PC-9 (cell line): ENCODE measurements at regions of chr9 and their contacts with region 1.

Region 1: DNA sequence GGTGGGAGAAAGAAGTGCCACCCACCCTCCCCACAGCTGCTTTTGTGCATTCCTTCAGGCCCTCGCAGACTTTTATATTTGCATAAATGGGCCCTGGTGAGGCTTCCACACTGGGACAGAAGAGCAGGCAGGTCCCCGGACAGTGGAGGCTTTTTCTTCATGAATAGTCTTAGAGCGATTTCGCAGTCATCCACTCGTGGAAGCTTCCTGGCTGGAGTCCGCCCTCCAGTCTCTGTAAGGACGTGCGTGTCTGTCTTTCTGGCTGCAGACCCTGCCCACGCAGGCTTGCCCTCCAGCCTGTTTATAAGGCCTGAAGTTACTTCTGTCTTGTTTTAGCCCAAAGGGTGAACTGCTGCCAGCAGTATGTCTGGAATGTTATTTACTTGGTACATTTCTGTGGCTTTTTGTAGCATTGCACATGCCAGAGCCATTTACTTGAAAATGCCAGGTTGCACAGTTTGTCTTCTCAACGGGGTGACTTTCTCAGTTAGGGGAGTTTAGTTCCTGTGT is 195.7 kb downstream of the AOPEP start:
- DNase-seq: peak; percentile 79 to 99
- H3K4me3 ChIP-seq: peak overlapping the region; percentile 46
- H3K27ac ChIP-seq: peak overlapping the region; percentile 97
- H3K4me1 ChIP-seq: peaks cover 92% of the 10 kb centered on the region
- H3K27me3 ChIP-seq: no peaks in the 10 kb centered on the region
- CTCF ChIP-seq: no peak

Region 2: DNA sequence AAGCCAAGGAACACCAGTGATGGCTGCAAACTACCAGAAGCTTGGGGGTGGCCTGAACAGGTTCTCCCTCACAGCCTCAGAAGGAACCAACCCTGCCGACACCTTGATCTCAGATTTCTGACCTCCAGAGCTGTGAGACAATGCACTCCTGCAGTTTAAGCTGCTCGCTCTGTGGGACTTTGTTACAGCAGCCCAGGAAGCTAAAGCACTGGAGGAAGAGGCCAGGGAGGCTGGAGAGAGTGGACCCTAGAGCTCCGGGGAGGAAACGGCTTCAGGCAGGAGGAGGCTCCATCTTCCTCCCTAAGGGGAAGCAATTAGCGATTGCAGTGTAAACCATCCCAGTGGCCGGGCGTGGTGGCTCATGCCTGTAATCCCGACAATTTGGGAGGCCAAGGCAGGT is 992.1 kb before region 1 on chr9:
- CTCF ChIA-PET with region 1: no interaction called
- POLR2A ChIA-PET with region 1: no interaction called
- intact Hi-C with region 1: no loop called
- DNase-seq: no peak
- H3K4me3 ChIP-seq: no peak overlapping the region
- H3K27ac ChIP-seq: no peak overlapping the region
- H3K4me1 ChIP-seq: no peaks in the 10 kb centered on the region
- H3K27me3 ChIP-seq: peaks cover 97% of the 10 kb centered on the region
- CTCF ChIP-seq: no peak

Region 3: DNA sequence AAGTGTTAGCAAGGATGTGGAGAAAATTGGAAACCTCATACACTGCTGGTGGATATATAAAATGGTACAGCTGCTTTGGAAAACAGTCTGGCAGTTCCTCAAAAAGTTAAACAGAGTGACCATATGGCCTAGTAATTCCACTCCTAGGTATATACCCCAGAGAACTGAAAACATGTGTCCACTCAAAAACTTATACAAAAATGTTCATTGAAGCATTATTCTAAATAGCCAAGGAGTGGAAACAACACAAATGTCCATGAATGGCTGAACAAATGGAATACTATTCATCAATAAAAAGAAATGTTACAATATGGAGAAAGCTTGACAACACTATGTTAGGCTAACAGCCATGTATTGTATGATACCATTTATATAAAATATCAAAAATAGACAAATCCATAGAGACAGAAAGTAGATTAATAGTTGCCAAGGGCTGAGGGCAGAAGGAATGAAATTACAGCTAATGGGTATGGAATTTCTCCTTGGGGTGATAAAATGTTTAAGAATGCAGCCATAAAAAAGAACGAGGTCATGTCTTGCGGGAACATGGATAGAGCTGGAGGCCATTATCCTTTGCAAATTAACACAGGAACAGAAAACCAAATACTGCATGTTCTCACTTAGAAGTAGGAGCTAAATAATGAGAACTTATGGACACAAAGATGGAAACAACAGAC is 249.2 kb before region 1 on chr9:
- CTCF ChIA-PET with region 1: no interaction called
- POLR2A ChIA-PET with region 1: interaction called, 5 read pairs
- intact Hi-C with region 1: loop called (anchors 5 kb)
- DNase-seq: peak in 1 of 2 experiments; percentile 85
- H3K4me3 ChIP-seq: no peak overlapping the region; the same call in 1 of the 2 replicates
- H3K27ac ChIP-seq: peak overlapping the region; percentile 61
- H3K4me1 ChIP-seq: peaks cover 19% of the 10 kb centered on the region
- H3K27me3 ChIP-seq: no peaks in the 10 kb centered on the region
- CTCF ChIP-seq: no peak

Region 4: GRCh38 chr9:94726495-94727191 is 195.5 kb before region 1 on chr9 and contains the start of gene AOPEP:
- CTCF ChIA-PET with region 1: no interaction called
- POLR2A ChIA-PET with region 1: interaction called, 4 read pairs
- intact Hi-C with region 1: loop called (anchors 2 kb)
- DNase-seq: peak; percentile 85 to 99
- H3K4me3 ChIP-seq: peak within 1 kb of the TSS; percentile 72
- H3K27ac ChIP-seq: peak within 1 kb of the TSS; percentile 69
- H3K4me1 ChIP-seq: peaks cover 16% of the 10 kb centered on the region
- H3K27me3 ChIP-seq: no peaks in the 10 kb centered on the region
- CTCF ChIP-seq: no peak
- total RNA-seq, gene AOPEP: 90.0 and 135 TPM in 2 replicates

Region 5: GRCh38 chr9:94805585-94805984 is 116.6 kb before region 1 on chr9:
- CTCF ChIA-PET with region 1: no interaction called
- POLR2A ChIA-PET with region 1: interaction called, 4 read pairs
- intact Hi-C with region 1: loop called (anchors 1 kb)
- DNase-seq: peak; percentile 69 to 100
- H3K4me3 ChIP-seq: peak overlapping the region; percentile 0; the same call in 1 of the 2 replicates
- H3K27ac ChIP-seq: peak overlapping the region; percentile 94
- H3K4me1 ChIP-seq: peaks cover 54% of the 10 kb centered on the region
- H3K27me3 ChIP-seq: no peaks in the 10 kb centered on the region
- CTCF ChIP-seq: no peak

Region 6: GRCh38 chr9:94821098-94821887 is 100.9 kb before region 1 on chr9:
- CTCF ChIA-PET with region 1: no interaction called
- POLR2A ChIA-PET with region 1: interaction called, 16 read pairs
- intact Hi-C with region 1: loop called (anchors 2 kb)
- DNase-seq: no peak
- H3K4me3 ChIP-seq: no peak overlapping the region
- H3K27ac ChIP-seq: peak overlapping the region; percentile 96; the same call in 1 of the 2 replicates
- H3K4me1 ChIP-seq: peaks cover 64% of the 10 kb centered on the region
- H3K27me3 ChIP-seq: no peaks in the 10 kb centered on the region
- CTCF ChIP-seq: no peak

Region 7: GRCh38 chr9:94900222-94901018 is 21.7 kb before region 1 on chr9:
- CTCF ChIA-PET with region 1: no interaction called
- POLR2A ChIA-PET with region 1: interaction called, 11 read pairs
- intact Hi-C with region 1: no loop called
- DNase-seq: peak in 1 of 2 experiments; percentile 85
- H3K4me3 ChIP-seq: no peak overlapping the region; the same call in 1 of the 2 replicates
- H3K27ac ChIP-seq: peak overlapping the region; percentile 83
- H3K4me1 ChIP-seq: peaks cover 55% of the 10 kb centered on the region
- H3K27me3 ChIP-seq: no peaks in the 10 kb centered on the region
- CTCF ChIP-seq: no peak

Region 8: DNA sequence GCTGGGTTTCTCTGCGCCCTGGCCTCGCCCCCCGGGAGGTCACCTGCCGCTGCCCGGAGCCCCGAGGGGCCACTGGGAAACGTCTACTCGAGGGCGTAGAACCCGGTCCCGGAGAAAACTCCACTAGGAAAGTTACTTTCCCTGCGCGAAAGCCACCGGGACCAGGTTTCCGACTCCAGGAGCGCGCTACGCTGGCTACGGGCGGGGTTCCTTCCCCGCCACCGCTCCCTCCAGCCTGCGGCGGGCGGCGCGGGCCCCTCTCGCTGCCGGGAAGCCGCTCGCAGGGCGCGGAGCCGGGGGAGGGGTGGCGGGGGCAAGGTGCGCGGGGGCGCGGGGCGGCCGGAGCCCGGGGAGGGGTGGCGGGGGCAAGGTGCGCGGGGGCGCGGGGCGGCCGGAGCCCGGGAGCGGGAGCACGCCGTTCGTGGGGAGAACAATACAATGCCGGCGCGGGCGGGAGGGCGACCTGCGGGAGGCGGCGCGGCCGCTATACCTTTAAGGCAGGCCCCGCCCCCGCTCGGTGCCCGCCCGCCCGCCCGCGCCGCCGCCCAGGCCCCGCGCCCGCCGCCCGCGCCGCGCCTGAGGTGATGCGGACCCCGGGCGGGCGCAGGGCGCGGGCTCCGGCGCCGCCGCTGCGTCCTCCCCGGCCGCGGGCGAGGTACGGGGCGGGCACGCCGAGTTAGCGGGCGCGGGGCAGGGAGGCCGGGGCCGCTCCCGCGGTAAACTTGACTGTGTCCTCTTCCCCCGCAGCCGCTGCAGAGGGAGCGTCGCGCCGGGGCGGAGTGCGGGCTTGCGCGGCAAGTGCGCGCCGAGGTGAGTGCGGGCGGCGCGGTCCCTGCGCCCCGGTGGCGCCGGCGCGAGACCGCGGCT is 82.5 kb after region 1 on chr9:
- CTCF ChIA-PET with region 1: no interaction called
- POLR2A ChIA-PET with region 1: interaction called, 18 read pairs
- intact Hi-C with region 1: loop called (anchors 1 kb)
- DNase-seq: peak in 1 of 2 experiments; percentile 65
- H3K4me3 ChIP-seq: peak overlapping the region; percentile 91
- H3K27ac ChIP-seq: peak overlapping the region; percentile 90
- H3K4me1 ChIP-seq: peaks cover 46% of the 10 kb centered on the region
- H3K27me3 ChIP-seq: no peaks in the 10 kb centered on the region
- CTCF ChIP-seq: no peak